HepG2 (cell line): ENCODE measurements at regions of chr14 and their contacts with region 1.

Region 1: DNA sequence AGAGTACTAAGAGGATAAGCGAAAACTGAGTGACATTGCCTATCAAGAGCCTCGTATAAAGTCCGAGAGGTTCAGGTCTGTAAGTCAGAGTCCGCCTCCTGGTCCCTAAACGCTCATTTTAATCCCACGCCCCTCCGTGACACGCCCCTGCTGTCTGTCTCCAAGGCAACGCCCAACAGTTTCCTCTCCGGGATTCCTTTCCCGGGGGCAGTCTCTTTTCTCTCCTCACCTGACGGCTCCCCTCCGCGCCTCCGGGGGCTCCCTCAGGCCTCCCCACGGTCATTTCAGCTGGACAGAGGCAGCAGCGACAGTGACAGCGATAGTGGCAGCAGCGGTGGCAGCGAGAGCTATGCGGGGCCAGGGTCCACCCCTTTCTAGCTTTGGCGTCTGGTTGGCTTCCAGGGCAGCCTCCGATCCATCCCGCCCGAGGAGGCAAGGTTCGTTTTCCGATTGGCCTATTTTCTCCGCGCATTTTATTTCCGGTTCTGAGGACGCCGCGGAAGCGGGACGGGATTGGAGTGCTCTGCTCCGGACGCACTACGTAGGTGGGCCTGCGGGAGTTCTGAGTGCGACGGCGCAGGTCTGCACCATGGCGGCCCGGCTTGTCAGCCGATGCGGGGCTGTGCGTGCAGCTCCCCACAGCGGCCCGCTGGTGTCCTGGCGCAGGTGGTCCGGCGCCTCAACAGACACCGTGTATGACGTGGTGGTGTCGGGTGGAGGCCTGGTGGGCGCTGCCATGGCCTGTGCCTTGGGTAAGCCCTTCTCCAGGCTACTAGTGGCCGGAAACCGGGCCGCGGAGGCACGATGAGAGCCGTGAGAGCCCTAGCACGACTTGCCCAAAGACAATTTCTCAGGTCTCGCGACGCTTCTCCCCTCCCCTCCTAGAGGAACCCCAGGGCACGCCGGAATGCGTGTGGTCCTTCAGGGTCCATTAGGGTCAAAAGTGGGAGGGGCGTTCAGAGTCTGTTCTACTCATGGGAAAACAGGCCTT is at the starts of genes COQ6 and FAM161B:
- DNase-seq: peak; percentile 95
- ATAC-seq: peak; percentile 95
- H3K4me3 ChIP-seq: peak within 1 kb of the TSS; percentile 61 to 82 (median 78)
- H3K27ac ChIP-seq: peak within 1 kb of the TSS; percentile 99
- H3K4me1 ChIP-seq: peaks cover 11% of the 10 kb centered on the region
- H3K27me3 ChIP-seq: no peaks in the 10 kb centered on the region
- CTCF ChIP-seq: peak; percentile 55
- EP300 ChIP-seq: peak in 1 of 2 experiments; percentile 5; a peak in 1 of 4 replicates
- POLR2A ChIP-seq: peak; percentile 83 to 96
- RAD21 ChIP-seq: peak; percentile 60
- total RNA-seq, gene COQ6: 18.1 and 18.9 TPM in 2 replicates
- total RNA-seq, gene FAM161B: 1.6 and 2.0 TPM in 2 replicates

Region 2: GRCh38 chr14:73886449-73887317 is 63.4 kb before region 1 on chr14 and contains the start of gene ZNF410:
- CTCF ChIA-PET with region 1: no interaction called
- POLR2A ChIA-PET with region 1: interaction called, 16 read pairs
- in situ Hi-C with region 1: no loop called
- intact Hi-C with region 1: no loop called
- DNase-seq: peak; percentile 90
- ATAC-seq: peak; percentile 98
- H3K4me3 ChIP-seq: peak within 1 kb of the TSS; percentile 65 to 99 (median 90)
- H3K27ac ChIP-seq: peak within 1 kb of the TSS; percentile 88
- H3K4me1 ChIP-seq: peaks cover 35% of the 10 kb centered on the region
- H3K27me3 ChIP-seq: no peaks in the 10 kb centered on the region
- CTCF ChIP-seq: peak; percentile 27; the same call in 1 of the 2 replicates
- EP300 ChIP-seq: no peak
- POLR2A ChIP-seq: peak; percentile 63 to 91
- RAD21 ChIP-seq: peak; percentile 13; the same call in 1 of the 2 replicates
- total RNA-seq, gene ZNF410: 44.3 and 55.2 TPM in 2 replicates

Region 3: GRCh38 chr14:73997108-73997943 is 47.3 kb after region 1 on chr14:
- CTCF ChIA-PET with region 1: no interaction called
- POLR2A ChIA-PET with region 1: interaction called, 24 read pairs
- in situ Hi-C with region 1: no loop called
- intact Hi-C with region 1: loop called (anchors 2 kb)
- DNase-seq: peak; percentile 71
- ATAC-seq: peak; percentile 87
- H3K4me3 ChIP-seq: peak overlapping the region; percentile 30 to 53 (median 46); a peak in 5 of 6 replicates
- H3K27ac ChIP-seq: peak overlapping the region; percentile 95
- H3K4me1 ChIP-seq: peaks cover 87% of the 10 kb centered on the region
- H3K27me3 ChIP-seq: no peaks in the 10 kb centered on the region
- CTCF ChIP-seq: no peak
- EP300 ChIP-seq: peak in 1 of 2 experiments; percentile 10; a peak in 2 of 4 replicates
- POLR2A ChIP-seq: peak; percentile 61 to 70
- RAD21 ChIP-seq: no peak

Region 4: GRCh38 chr14:74018586-74019407 is 68.8 kb after region 1 on chr14 and contains the starts of genes BBOF1 and ENTPD5:
- CTCF ChIA-PET with region 1: no interaction called
- POLR2A ChIA-PET with region 1: interaction called, 9 read pairs
- in situ Hi-C with region 1: loop called (anchors 5 kb)
- intact Hi-C with region 1: no loop called
- DNase-seq: peak; percentile 61
- ATAC-seq: peak; percentile 86
- H3K4me3 ChIP-seq: peak within 1 kb of the TSS; percentile 82 to 91 (median 89)
- H3K27ac ChIP-seq: peak within 1 kb of the TSS; percentile 96
- H3K4me1 ChIP-seq: peaks cover 70% of the 10 kb centered on the region
- H3K27me3 ChIP-seq: no peaks in the 10 kb centered on the region
- CTCF ChIP-seq: 0 out of 2 replicates have a peak, but pooled peaks have one; percentile 2
- EP300 ChIP-seq: no peak
- POLR2A ChIP-seq: peak; percentile 77 to 83; a peak in 3 of 4 replicates
- RAD21 ChIP-seq: no peak; the same call in none of the 2 replicates
- total RNA-seq, gene BBOF1: 2.3 and 2.4 TPM in 2 replicates
- total RNA-seq, gene ENTPD5: 20.6 and 33.8 TPM in 2 replicates

Region 5: DNA sequence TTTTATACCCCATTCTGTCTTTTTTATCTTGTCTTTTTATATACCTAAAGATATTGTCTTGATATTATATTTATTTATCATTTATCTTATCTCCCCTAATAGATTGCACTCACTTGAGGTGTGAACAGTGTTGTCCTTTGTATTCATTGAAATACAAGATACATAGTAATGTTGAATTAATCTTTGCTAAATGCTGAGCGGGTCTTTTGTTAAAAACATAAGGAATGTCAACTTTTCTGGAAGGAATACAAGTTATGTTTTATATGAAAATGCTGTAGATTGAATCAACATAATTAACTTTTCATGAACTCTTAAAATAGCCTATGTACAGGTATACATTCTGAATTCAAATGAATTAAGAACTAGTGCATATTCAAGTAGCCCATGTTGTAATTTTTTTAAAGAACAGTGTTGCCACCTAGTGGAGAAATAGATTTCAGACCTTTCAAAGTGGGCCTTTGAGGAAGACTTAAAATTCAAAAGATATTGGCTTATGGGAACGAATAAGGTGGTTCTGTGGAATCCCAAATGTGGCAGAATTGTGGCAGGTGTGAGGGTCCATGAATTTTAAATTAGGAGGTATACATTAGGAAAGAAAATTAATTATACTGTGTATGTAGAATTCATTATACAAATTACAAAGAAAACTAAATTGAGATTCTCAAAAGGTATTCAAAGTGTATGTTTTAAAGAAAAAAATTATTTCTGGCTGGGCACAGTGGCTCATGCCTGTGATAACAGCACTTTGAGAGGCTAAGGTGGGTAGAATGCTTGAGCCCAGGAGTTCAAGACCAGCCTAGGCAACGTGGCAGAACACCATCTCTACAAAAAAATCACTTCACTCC is 88.2 kb after region 1 on chr14:
- CTCF ChIA-PET with region 1: no interaction called
- POLR2A ChIA-PET with region 1: no interaction called
- in situ Hi-C with region 1: no loop called
- intact Hi-C with region 1: loop called (anchors 5 kb)
- DNase-seq: peak; percentile 67
- ATAC-seq: peak; percentile 51
- H3K4me3 ChIP-seq: no peak overlapping the region
- H3K27ac ChIP-seq: no peak overlapping the region
- H3K4me1 ChIP-seq: no peaks in the 10 kb centered on the region
- H3K27me3 ChIP-seq: no peaks in the 10 kb centered on the region
- CTCF ChIP-seq: peak; percentile 70
- EP300 ChIP-seq: no peak
- POLR2A ChIP-seq: no peak
- RAD21 ChIP-seq: no peak

Region 6: GRCh38 chr14:74084277-74085046 is 134.4 kb after region 1 on chr14 and contains the starts of genes ALDH6A1 and LIN52:
- CTCF ChIA-PET with region 1: no interaction called
- POLR2A ChIA-PET with region 1: interaction called, 11 read pairs
- in situ Hi-C with region 1: no loop called
- intact Hi-C with region 1: no loop called
- DNase-seq: peak; percentile 100
- ATAC-seq: peak; percentile 97
- H3K4me3 ChIP-seq: peak within 1 kb of the TSS; percentile 95 to 100 (median 98)
- H3K27ac ChIP-seq: peak within 1 kb of the TSS; percentile 95
- H3K4me1 ChIP-seq: peaks cover 46% of the 10 kb centered on the region
- H3K27me3 ChIP-seq: no peaks in the 10 kb centered on the region; a peak in 1 of 5 replicates
- CTCF ChIP-seq: peak; percentile 53
- EP300 ChIP-seq: peak in 1 of 2 experiments; percentile 3; a peak in 1 of 4 replicates
- POLR2A ChIP-seq: peak; percentile 89 to 92
- RAD21 ChIP-seq: peak; percentile 49
- total RNA-seq, gene ALDH6A1: 49.9 and 71.6 TPM in 2 replicates
- total RNA-seq, gene LIN52: 23.3 and 30.8 TPM in 2 replicates

Region 7: GRCh38 chr14:74712499-74713394 is 762.7 kb after region 1 on chr14 and contains the starts of genes AREL1 and FCF1:
- CTCF ChIA-PET with region 1: no interaction called
- POLR2A ChIA-PET with region 1: no interaction called
- in situ Hi-C with region 1: no loop called
- intact Hi-C with region 1: no loop called
- DNase-seq: peak; percentile 90
- ATAC-seq: peak; percentile 99
- H3K4me3 ChIP-seq: peak within 1 kb of the TSS; percentile 84 to 92 (median 86)
- H3K27ac ChIP-seq: peak within 1 kb of the TSS; percentile 65
- H3K4me1 ChIP-seq: peaks cover 38% of the 10 kb centered on the region
- H3K27me3 ChIP-seq: no peaks in the 10 kb centered on the region; a peak in 1 of 5 replicates
- CTCF ChIP-seq: no peak
- EP300 ChIP-seq: no peak
- POLR2A ChIP-seq: peak; percentile 81 to 84
- RAD21 ChIP-seq: no peak
- total RNA-seq, gene AREL1: 18.4 and 21.3 TPM in 2 replicates
- total RNA-seq, gene FCF1: 44.4 and 70.8 TPM in 2 replicates